B cell (primary cell): ENCODE measurements at regions of chr12 and their contacts with region 1.

Region 1: GRCh38 chr12:4526923-4527546 is 11.7 kb upstream of the RAD51AP1 start:
- DNase-seq: peak; percentile 34
- ATAC-seq: no peak
- H3K4me3 ChIP-seq: no peak overlapping the region
- H3K4me3 Mint-ChIP-seq: no peak overlapping the region
- H3K27ac ChIP-seq: no peak overlapping the region
- H3K27ac Mint-ChIP-seq: no peak overlapping the region
- H3K4me1 ChIP-seq: no peaks in the 10 kb centered on the region
- H3K4me1 Mint-ChIP-seq: no peaks in the 10 kb centered on the region
- H3K27me3 ChIP-seq: no peaks in the 10 kb centered on the region
- H3K27me3 Mint-ChIP-seq: no peaks in the 10 kb centered on the region
- CTCF ChIP-seq: peak; percentile 91

Region 2: GRCh38 chr12:3998968-3999826 is 527.8 kb before region 1 on chr12:
- CTCF ChIA-PET with region 1: interaction called, 3 read pairs
- POLR2A ChIA-PET with region 1: no interaction called
- intact Hi-C with region 1: loop called (anchors 2 kb)
- DNase-seq: no peak
- ATAC-seq: no peak
- H3K4me3 ChIP-seq: no peak overlapping the region
- H3K4me3 Mint-ChIP-seq: no peak overlapping the region
- H3K27ac ChIP-seq: no peak overlapping the region
- H3K27ac Mint-ChIP-seq: no peak overlapping the region
- H3K4me1 ChIP-seq: peaks cover 4 to 7% of the 10 kb centered on the region in 2 donors
- H3K4me1 Mint-ChIP-seq: peaks cover 4% of the 10 kb centered on the region
- H3K27me3 ChIP-seq: peaks cover 0 to 3% (median under 1%) of the 10 kb centered on the region in 4 experiments
- H3K27me3 Mint-ChIP-seq: peaks cover 4% of the 10 kb centered on the region
- CTCF ChIP-seq: no peak

Region 3: GRCh38 chr12:4307593-4308333 is 219.3 kb before region 1 on chr12:
- CTCF ChIA-PET with region 1: interaction called, 5 read pairs
- POLR2A ChIA-PET with region 1: no interaction called
- intact Hi-C with region 1: loop called (anchors 1 kb)
- DNase-seq: peak; percentile 29
- ATAC-seq: peak; percentile 41
- H3K4me3 ChIP-seq: no peak overlapping the region
- H3K4me3 Mint-ChIP-seq: no peak overlapping the region
- H3K27ac ChIP-seq: no peak overlapping the region
- H3K27ac Mint-ChIP-seq: no peak overlapping the region
- H3K4me1 ChIP-seq: no peaks in the 10 kb centered on the region
- H3K4me1 Mint-ChIP-seq: no peaks in the 10 kb centered on the region
- H3K27me3 ChIP-seq: no peaks in the 10 kb centered on the region
- H3K27me3 Mint-ChIP-seq: no peaks in the 10 kb centered on the region
- CTCF ChIP-seq: no peak

Region 4: DNA sequence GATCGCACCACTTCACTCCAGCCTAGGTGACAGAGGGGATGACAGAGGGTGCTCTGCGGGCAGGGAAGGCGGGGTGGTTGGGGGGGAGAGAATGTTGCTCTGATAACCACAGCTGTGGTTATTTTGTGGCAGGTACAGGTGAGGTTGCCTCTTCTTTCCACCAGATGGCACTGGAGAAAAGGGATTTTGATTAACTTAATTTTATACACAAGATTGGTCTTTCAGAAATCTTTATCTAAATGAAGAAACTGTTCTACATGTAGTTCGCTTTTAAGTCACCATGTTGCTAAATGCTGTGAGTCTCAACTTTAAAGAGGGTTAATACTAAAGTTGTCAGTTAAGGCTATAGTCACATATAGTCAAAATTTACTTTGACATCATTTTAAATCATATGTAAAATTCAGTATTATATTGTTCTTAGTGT is 173.2 kb before region 1 on chr12:
- CTCF ChIA-PET with region 1: interaction called, 3 read pairs
- POLR2A ChIA-PET with region 1: no interaction called
- intact Hi-C with region 1: loop called (anchors 5 kb)
- DNase-seq: peak; percentile 16
- ATAC-seq: no peak
- H3K4me3 ChIP-seq: no peak overlapping the region
- H3K4me3 Mint-ChIP-seq: no peak overlapping the region
- H3K27ac ChIP-seq: no peak overlapping the region
- H3K27ac Mint-ChIP-seq: no peak overlapping the region
- H3K4me1 ChIP-seq: no peaks in the 10 kb centered on the region
- H3K4me1 Mint-ChIP-seq: no peaks in the 10 kb centered on the region
- H3K27me3 ChIP-seq: no peaks in the 10 kb centered on the region
- H3K27me3 Mint-ChIP-seq: no peaks in the 10 kb centered on the region
- CTCF ChIP-seq: peak; percentile 69

Region 5: DNA sequence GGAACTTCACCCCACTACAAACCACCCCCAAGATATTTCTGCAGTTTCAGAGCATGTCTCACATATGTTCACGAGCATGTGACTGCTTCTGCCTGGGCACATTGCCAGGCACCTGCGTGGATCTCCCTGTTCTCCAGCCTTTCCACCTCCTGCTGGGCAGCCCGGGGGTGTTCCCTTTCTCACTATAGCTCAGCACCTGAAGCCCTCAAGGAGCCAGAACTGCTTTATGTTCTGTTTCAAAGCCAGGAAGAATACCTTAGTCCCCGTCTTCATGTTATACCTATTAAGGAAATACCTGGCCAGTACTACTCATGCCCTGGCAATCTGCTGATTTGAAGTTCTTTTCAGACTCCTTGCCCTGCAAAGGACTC is 77.2 kb before region 1 on chr12:
- CTCF ChIA-PET with region 1: no interaction called
- POLR2A ChIA-PET with region 1: no interaction called
- intact Hi-C with region 1: no loop called
- DNase-seq: no peak
- ATAC-seq: no peak
- H3K4me3 ChIP-seq: no peak overlapping the region
- H3K4me3 Mint-ChIP-seq: no peak overlapping the region
- H3K27ac ChIP-seq: no peak overlapping the region
- H3K27ac Mint-ChIP-seq: no peak overlapping the region
- H3K4me1 ChIP-seq: no peaks in the 10 kb centered on the region
- H3K4me1 Mint-ChIP-seq: no peaks in the 10 kb centered on the region
- H3K27me3 ChIP-seq: peaks cover 0 to 22% (median 8%) of the 10 kb centered on the region in 4 experiments
- H3K27me3 Mint-ChIP-seq: peaks cover 49% of the 10 kb centered on the region
- CTCF ChIP-seq: no peak

Region 6: GRCh38 chr12:5171701-5172100 is 644.7 kb after region 1 on chr12:
- CTCF ChIA-PET with region 1: no interaction called
- POLR2A ChIA-PET with region 1: no interaction called
- intact Hi-C with region 1: no loop called
- DNase-seq: no peak
- ATAC-seq: no peak
- H3K4me3 ChIP-seq: no peak overlapping the region
- H3K4me3 Mint-ChIP-seq: no peak overlapping the region
- H3K27ac ChIP-seq: no peak overlapping the region
- H3K27ac Mint-ChIP-seq: no peak overlapping the region
- H3K4me1 ChIP-seq: no peaks in the 10 kb centered on the region
- H3K4me1 Mint-ChIP-seq: no peaks in the 10 kb centered on the region
- H3K27me3 ChIP-seq: peaks cover 0 to 2% (median 0%) of the 10 kb centered on the region in 4 experiments
- H3K27me3 Mint-ChIP-seq: peaks cover 27% of the 10 kb centered on the region
- CTCF ChIP-seq: no peak